Sigmoid colon (tissue), 7 donors: ENCODE measurements at regions of chr1 and their contacts with region 1.

Region 1: GRCh38 chr1:11681071-11681771 is at the start of gene MAD2L2:
- DNase-seq: peak; percentile 93
- H3K4me3 ChIP-seq: peak within 1 kb of the TSS; percentile 79 to 98 (median 94)
- H3K27ac ChIP-seq: peak within 1 kb of the TSS; percentile 88 to 92 (median 88)
- H3K4me1 ChIP-seq: peaks cover 0 to 16% (median 12%) of the 10 kb centered on the region in 4 donors
- H3K27me3 ChIP-seq: no peaks in the 10 kb centered on the region
- CTCF ChIP-seq: no peak
- EP300 ChIP-seq: no peak
- POLR2A ChIP-seq: peak in 1 of 2 donors; percentile 16
- total RNA-seq, gene MAD2L2: 28.2 to 57.9 (median 41.4) TPM

Region 2: DNA sequence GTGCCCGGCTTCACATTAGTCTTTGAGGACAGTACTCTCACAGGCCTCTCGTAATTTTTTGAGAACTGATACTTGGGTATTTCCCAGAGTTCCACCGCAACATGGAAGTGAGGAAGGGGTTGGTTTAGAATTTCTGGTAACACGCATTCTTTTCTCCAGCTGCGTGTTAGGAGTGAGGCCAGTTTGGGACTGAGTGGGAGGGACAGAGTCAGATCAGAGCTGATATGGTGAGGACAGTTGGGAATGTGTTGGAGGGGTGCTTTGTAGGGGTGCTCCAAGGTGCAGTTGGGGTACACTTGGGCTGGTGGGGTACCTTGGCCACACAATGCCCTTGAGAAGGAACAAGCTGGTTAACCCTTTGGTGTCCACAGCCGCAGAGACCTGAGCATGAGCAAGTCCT is 10.5 kb before region 1 on chr1:
- intact Hi-C with region 1: loop called (anchors 2 kb)
- DNase-seq: no peak
- H3K4me3 ChIP-seq: no peak overlapping the region
- H3K27ac ChIP-seq: no peak overlapping the region
- H3K4me1 ChIP-seq: no peaks in the 10 kb centered on the region
- H3K27me3 ChIP-seq: no peaks in the 10 kb centered on the region
- CTCF ChIP-seq: no peak
- EP300 ChIP-seq: no peak
- POLR2A ChIP-seq: no peak

Region 3: DNA sequence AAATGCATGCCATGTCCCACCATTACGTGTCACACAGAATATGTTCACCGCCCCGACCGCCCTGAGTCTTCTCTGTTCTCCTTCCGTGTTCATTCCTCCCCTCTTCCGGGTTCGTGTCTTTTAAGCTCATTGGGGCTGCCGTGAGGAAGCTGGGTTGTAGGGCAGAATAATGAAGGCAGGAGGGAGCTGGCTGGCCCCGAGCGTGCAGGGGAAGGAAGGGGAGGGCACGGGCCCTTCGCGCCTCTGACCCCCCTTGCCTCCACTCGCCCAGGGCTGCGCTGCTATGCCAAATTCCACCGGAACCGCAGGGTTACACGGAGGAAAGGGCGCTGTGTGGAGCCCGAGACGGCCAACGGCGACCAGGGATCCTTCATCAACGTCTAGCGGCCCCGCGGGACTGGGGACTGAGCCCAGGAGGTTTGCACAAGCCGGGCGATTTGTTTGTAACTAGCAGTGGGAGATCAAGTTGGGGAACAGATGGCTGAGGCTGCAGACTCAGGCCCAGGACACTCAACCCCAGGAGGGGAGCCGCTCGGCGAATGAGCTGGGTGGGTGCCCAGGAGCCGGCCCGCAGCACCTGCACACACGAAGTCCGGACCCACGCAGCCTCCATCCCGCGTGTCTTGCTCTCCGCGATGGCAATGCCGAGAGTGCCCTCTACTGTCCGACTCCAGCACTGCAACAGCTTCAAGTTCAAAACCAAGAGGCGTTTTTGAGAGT is 38.3 kb after region 1 on chr1:
- intact Hi-C with region 1: loop called (anchors 1 kb)
- DNase-seq: peak; percentile 91
- H3K4me3 ChIP-seq: peak overlapping the region in 3 of 4 donors; percentile 34 to 43 (median 42)
- H3K27ac ChIP-seq: peak overlapping the region; percentile 25 to 53 (median 46)
- H3K4me1 ChIP-seq: peaks cover 0 to 11% (median 9%) of the 10 kb centered on the region in 4 donors
- H3K27me3 ChIP-seq: peaks cover 0 to 5% (median 0%) of the 10 kb centered on the region in 3 donors
- CTCF ChIP-seq: peak; percentile 76 to 98 (median 92)
- EP300 ChIP-seq: no peak
- POLR2A ChIP-seq: no peak